Activated CD4-positive, alpha-beta memory T cell treated with anti-CD3 and anti-CD28 coated beads, Interleukin-2, amount 10 ng/mL, durations not matched to agents 7 days and 5 days (primary cell): ENCODE measurements at regions of chr12 and their contacts with region 1.

Region 1: GRCh38 chr12:96208801-96209549 is 14.8 kb downstream of the ELK3 start:
- DNase-seq: no peak
- H3K4me3 Mint-ChIP-seq: peak overlapping the region; percentile 40
- H3K27ac Mint-ChIP-seq: peak overlapping the region; percentile 90
- H3K4me1 Mint-ChIP-seq: peaks cover 99% of the 10 kb centered on the region
- H3K27me3 Mint-ChIP-seq: no peaks in the 10 kb centered on the region

Region 2: DNA sequence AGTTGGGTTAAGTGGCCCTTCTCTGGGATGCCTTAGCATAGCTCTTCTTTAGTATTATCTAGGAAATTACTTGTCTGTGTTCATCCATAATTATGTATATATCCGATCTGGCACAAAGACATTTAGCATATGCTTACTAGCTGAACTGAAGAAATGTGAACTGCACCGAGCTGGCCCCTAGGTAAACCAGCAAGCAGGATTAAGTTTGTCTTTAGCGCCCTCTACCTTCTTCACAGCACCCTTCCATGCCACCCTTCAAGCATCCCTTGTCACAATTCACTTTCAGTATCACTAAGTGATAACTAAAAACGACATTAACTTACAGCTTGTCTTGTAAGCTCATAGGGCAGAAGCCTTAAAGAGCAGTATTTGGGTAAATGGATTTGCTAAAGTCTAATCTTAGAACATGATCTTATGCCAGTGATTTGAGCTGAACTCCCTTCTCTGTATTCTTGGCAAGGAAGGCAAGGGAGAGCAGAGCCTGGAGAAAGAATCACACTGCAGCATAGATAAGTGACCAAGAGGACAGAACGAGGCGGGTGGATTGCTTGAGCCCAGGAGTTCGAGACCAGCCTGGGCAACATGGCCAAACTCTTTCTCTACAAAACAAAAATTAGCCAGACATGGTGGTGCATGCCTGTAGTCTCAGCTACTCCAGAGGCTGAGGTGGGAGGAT is 210.2 kb before region 1 on chr12:
- CTCF ChIA-PET with region 1: interaction called, 21 read pairs
- POLR2A ChIA-PET with region 1: no interaction called
- DNase-seq: peak; percentile 64
- H3K4me3 Mint-ChIP-seq: no peak overlapping the region
- H3K27ac Mint-ChIP-seq: no peak overlapping the region
- H3K4me1 Mint-ChIP-seq: peaks cover 15% of the 10 kb centered on the region
- H3K27me3 Mint-ChIP-seq: no peaks in the 10 kb centered on the region

Region 3: DNA sequence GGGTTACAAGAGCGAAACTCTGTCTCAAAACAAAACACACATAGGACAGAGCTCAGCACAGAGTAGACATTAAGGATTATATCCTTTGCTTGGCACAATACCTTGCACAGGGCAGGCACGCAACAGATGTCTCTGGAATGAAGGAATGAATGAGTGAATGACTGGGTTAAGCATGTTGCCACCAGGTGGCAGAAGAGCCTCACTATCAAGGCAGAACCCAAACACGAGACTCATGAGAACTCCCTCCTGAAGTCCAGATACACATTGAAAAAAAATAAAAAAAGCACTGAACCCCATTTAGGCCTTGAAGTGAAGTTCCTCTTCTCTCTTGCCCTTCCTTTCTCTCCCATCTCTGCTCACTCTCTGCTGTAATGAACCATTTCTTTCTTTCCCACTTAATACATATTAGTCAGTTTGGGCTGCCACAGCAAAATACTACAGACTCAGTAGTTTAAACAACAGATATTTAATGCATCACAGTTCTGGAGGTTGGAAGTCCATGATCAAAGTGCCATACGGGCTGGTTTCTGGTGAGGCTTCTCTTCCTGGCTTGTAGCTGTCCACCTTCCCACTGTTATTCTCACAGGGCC is 147.0 kb before region 1 on chr12:
- CTCF ChIA-PET with region 1: interaction called, 115 read pairs
- POLR2A ChIA-PET with region 1: interaction called, 4 read pairs
- DNase-seq: peak; percentile 83
- H3K4me3 Mint-ChIP-seq: no peak overlapping the region
- H3K27ac Mint-ChIP-seq: no peak overlapping the region
- H3K4me1 Mint-ChIP-seq: peaks cover 26% of the 10 kb centered on the region
- H3K27me3 Mint-ChIP-seq: no peaks in the 10 kb centered on the region

Region 4: GRCh38 chr12:96177013-96177412 is 32.0 kb before region 1 on chr12:
- CTCF ChIA-PET with region 1: interaction called, 17 read pairs
- POLR2A ChIA-PET with region 1: interaction called, 66 read pairs
- DNase-seq: peak; percentile 84
- H3K4me3 Mint-ChIP-seq: peak overlapping the region; percentile 44
- H3K27ac Mint-ChIP-seq: peak overlapping the region; percentile 93
- H3K4me1 Mint-ChIP-seq: peaks cover 34% of the 10 kb centered on the region
- H3K27me3 Mint-ChIP-seq: no peaks in the 10 kb centered on the region

Region 5: DNA sequence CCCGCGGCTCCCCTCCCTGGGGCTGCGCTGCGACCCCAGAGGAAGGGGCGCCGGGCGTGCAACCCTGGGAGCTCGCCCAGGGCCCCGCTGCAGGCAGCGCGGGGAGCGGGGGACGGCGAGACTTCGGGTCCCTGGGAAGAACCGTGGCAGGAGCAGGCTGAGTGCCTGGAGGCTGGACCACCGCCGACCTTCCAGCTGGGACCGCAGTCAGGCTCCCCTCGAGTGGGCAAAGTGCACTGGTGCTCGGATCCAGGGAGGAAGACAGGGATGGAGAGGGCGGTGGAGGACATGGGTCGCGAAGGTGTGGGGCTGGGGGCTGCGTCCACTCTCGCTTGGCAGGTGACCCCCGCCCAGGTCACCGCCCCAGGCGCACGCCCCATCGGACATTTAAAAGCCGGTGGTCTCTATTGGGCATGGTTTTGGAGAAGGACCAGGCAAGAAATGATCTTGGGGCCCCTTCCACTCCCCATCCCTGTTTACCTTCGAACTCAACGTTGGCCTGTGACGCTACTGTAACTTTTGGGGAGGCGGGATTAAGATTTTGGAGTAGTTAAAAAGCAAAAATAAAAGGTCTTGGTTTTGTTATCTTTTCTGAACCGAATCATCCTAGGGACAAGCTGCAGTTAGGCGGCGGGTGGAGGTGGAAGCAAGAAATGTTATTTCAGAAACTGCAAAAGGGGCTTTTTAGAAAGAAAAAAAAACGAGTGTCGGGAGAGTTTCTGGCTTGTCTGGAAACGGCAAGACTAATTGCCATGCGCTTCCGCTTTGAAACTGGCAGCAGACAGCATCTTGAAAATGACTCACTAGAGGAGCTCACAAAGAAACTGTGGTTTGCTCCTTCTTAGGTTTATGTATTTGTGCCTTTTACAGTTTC is 13.8 kb before region 1 on chr12:
- CTCF ChIA-PET with region 1: interaction called, 21 read pairs
- POLR2A ChIA-PET with region 1: interaction called, 103 read pairs
- DNase-seq: peak; percentile 78
- H3K4me3 Mint-ChIP-seq: peak overlapping the region; percentile 99
- H3K27ac Mint-ChIP-seq: peak overlapping the region; percentile 99
- H3K4me1 Mint-ChIP-seq: peaks cover 47% of the 10 kb centered on the region
- H3K27me3 Mint-ChIP-seq: no peaks in the 10 kb centered on the region

Region 6: DNA sequence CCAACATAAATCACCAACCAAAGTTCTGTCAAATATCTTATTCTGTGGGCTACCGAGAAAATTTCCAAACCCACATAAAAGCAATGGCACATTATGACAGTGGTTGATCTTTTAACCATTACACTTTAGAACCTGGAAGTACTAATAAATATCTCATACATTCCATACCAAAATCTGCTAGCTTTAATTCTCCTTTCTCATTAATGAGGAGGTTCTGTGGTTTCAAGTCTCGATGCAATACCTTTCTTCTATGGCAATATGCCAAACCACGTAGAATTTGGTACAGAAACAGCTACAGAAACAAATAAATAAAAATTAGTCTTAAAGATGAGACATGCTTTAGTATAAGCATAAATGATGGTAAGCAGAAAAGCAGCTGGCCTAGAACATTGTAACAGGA is 85.9 kb after region 1 on chr12:
- CTCF ChIA-PET with region 1: no interaction called
- POLR2A ChIA-PET with region 1: no interaction called
- DNase-seq: no peak
- H3K4me3 Mint-ChIP-seq: no peak overlapping the region
- H3K27ac Mint-ChIP-seq: no peak overlapping the region
- H3K4me1 Mint-ChIP-seq: peaks cover 15% of the 10 kb centered on the region
- H3K27me3 Mint-ChIP-seq: no peaks in the 10 kb centered on the region